Right ventricle myocardium inferior (tissue), 1 donor: ENCODE measurements at regions of chr7 and their contacts with region 1.

Region 1: GRCh38 chr7:128890306-128891109 is 20.0 kb downstream of the KCP start:
- DNase-seq: peak; percentile 68
- ATAC-seq: no peak

Region 2: GRCh38 chr7:129189661-129190310 is 299.3 kb after region 1 on chr7:
- intact Hi-C with region 1: loop called (anchors 5 kb)
- DNase-seq: no peak
- ATAC-seq: no peak